Common myeloid progenitor, CD34-positive (primary cell): ENCODE measurements at regions of chr1 and their contacts with region 1.

Region 1: DNA sequence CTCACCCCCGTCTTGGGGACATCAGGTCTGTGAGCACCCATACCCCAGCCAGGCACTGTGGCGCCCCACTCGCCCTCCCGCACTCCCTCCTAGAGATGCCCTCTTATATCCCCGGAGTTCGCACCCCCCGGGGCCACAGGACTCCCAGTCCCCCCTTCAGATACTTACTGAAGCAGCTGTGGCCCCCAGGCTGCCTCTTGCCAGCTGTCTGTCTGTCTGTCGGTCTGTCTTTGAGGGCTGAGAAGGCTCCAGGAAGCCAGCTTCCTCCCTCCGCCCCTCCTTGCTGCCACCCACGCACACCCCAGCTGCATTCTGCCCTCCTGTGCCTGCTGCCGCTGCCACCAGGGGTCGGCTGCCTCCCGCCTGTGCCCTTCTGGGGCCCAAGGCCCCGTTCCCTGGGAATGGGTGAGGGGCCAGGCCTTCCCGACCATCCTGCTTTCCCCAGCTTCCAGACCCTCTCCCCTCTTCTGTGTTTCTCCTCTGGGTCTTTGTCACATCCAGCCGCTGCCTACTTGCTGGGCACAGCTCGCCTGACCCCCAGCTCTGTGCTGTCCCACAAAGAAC is at the start of gene PTPN7:
- DNase-seq: peak; percentile 71 to 90 (median 85)
- H3K4me3 ChIP-seq: peak within 1 kb of the TSS; percentile 37 to 87 (median 72)
- H3K27ac ChIP-seq: peak within 1 kb of the TSS; percentile 65 to 93
- H3K4me1 ChIP-seq: peaks cover 6 to 96% (median 93%) of the 10 kb centered on the region in 4 experiments
- H3K27me3 ChIP-seq: no peaks in the 10 kb centered on the region

Region 2: GRCh38 chr1:201888282-201889089 is 272.0 kb before region 1 on chr1 and contains the start of gene SHISA4:
- CTCF ChIA-PET with region 1: no interaction called
- POLR2A ChIA-PET with region 1: no interaction called
- DNase-seq: peak in 2 of 3 donors; percentile 37 to 49
- H3K4me3 ChIP-seq: peak within 1 kb of the TSS; percentile 16 to 73 (median 59)
- H3K27ac ChIP-seq: no peak within 1 kb of the TSS
- H3K4me1 ChIP-seq: peaks cover 7 to 27% (median 25%) of the 10 kb centered on the region in 4 experiments
- H3K27me3 ChIP-seq: peaks cover 9 to 49% (median 31%) of the 10 kb centered on the region in 5 experiments

Region 3: GRCh38 chr1:202170726-202171125 is 10.3 kb after region 1 on chr1:
- CTCF ChIA-PET with region 1: interaction called, 32 read pairs
- POLR2A ChIA-PET with region 1: interaction called, 3 read pairs
- DNase-seq: no peak
- H3K4me3 ChIP-seq: no peak overlapping the region
- H3K27ac ChIP-seq: no peak overlapping the region
- H3K4me1 ChIP-seq: peaks cover 3 to 34% (median 23%) of the 10 kb centered on the region in 4 experiments
- H3K27me3 ChIP-seq: no peaks in the 10 kb centered on the region

Region 4: DNA sequence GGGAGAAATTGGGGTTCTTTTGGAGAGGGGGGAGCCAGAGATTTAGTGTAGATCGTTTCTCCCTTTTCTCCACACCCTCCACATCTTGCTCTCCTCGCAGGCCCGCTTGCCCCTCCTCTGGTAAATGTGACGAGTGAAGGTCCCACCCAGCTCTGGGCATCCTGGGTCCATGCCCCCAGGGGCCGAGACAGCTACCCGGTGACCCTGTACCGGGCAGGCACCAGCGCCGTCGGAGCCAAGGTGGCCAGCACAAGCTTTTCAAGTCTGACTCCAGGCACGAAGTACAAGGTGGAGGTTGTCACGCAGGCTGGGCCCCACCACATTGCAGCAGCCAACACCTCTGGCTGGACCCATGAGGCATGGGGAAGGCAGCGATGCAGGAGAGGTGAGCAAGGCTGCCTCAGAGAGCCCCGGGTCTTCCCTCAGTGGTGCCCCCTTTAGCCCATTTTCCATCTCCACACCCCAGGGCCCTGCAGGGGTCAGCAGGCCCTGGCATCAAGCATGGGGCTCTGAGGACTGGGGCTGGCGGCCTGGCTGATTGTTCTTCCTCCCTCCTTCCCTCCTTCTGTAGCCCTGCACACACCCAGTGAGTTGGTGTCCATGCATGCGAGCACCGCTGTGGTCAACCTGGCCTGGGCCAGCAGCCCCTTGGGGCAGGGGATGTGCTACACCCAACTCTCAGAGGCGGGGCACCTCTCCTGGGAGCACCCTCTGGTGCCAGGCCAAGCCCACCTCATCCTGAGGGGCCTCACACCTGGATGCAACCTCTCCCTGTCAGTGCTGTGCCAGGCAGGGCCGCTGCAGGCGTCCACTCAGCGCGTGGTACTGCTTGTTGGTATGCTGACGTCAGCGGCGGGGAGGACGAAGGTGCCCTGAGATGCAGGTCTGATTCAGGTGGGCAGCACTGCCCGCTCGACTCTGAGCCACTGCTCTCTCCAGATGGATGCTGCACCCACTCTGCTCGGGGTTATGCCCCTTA is 16.8 kb after region 1 on chr1:
- CTCF ChIA-PET with region 1: interaction called, 32 read pairs
- POLR2A ChIA-PET with region 1: no interaction called
- DNase-seq: no peak
- H3K4me3 ChIP-seq: no peak overlapping the region
- H3K27ac ChIP-seq: no peak overlapping the region
- H3K4me1 ChIP-seq: no peaks in the 10 kb centered on the region
- H3K27me3 ChIP-seq: no peaks in the 10 kb centered on the region

Region 5: GRCh38 chr1:202184750-202185460 is 24.4 kb after region 1 on chr1:
- CTCF ChIA-PET with region 1: interaction called, 18 read pairs
- POLR2A ChIA-PET with region 1: no interaction called
- DNase-seq: peak; percentile 82 to 87 (median 86)
- H3K4me3 ChIP-seq: no peak overlapping the region
- H3K27ac ChIP-seq: no peak overlapping the region
- H3K4me1 ChIP-seq: peaks cover 0 to 3% (median 1%) of the 10 kb centered on the region in 4 experiments
- H3K27me3 ChIP-seq: no peaks in the 10 kb centered on the region